ENCODE measurements at regions of chr5 and their contacts with region 1.

Region 1: DNA sequence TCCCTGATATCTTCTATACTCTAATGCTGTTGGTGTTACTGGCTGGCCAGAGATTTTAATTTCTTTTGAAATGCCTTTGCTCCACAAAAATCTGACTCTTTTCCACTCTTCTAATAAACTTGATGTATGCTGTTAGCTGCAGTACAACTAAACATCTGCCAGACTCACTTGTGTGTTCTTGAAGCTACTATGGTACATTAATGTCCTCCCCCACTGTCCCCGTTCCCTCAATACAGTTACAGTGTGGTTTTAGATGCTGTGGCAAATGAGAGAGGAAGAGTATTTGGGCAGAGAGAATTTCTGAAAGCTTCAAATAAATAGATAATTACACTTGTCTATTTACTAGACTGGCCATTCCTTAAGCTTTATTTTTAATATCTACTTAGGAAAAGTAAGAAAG is 18.3 kb upstream of the ERAP1 start:
- DNase-seq: no peak
- CTCF ChIP-seq: no peak

Region 2: GRCh38 chr5:96838201-96839070 is 12.4 kb after region 1 on chr5:
- CTCF ChIA-PET with region 1: interaction called, 11 read pairs
- POLR2A ChIA-PET with region 1: no interaction called
- DNase-seq: no peak
- CTCF ChIP-seq: no peak

Region 3: GRCh38 chr5:96880444-96881164 is 54.5 kb after region 1 on chr5:
- CTCF ChIA-PET with region 1: no interaction called
- POLR2A ChIA-PET with region 1: no interaction called
- DNase-seq: no peak
- CTCF ChIP-seq: no peak